Activated CD4-positive, alpha-beta memory T cell treated with anti-CD3 and anti-CD28 coated beads for 36 hours (primary cell): ENCODE measurements at regions of chr1 and their contacts with region 1.

Region 1: GRCh38 chr1:248229360-248229908 is 1.8 kb upstream of the OR2M4 start:
- DNase-seq: no peak
- H3K4me3 Mint-ChIP-seq: no peak overlapping the region
- H3K27ac Mint-ChIP-seq: no peak overlapping the region
- H3K4me1 Mint-ChIP-seq: no peaks in the 10 kb centered on the region
- H3K27me3 Mint-ChIP-seq: no peaks in the 10 kb centered on the region

Region 2: GRCh38 chr1:248114890-248115289 is 114.5 kb before region 1 on chr1:
- CTCF ChIA-PET with region 1: no interaction called
- POLR2A ChIA-PET with region 1: no interaction called
- intact Hi-C with region 1: no loop called
- DNase-seq: no peak
- H3K4me3 Mint-ChIP-seq: no peak overlapping the region
- H3K27ac Mint-ChIP-seq: no peak overlapping the region
- H3K4me1 Mint-ChIP-seq: no peaks in the 10 kb centered on the region
- H3K27me3 Mint-ChIP-seq: no peaks in the 10 kb centered on the region

Region 3: DNA sequence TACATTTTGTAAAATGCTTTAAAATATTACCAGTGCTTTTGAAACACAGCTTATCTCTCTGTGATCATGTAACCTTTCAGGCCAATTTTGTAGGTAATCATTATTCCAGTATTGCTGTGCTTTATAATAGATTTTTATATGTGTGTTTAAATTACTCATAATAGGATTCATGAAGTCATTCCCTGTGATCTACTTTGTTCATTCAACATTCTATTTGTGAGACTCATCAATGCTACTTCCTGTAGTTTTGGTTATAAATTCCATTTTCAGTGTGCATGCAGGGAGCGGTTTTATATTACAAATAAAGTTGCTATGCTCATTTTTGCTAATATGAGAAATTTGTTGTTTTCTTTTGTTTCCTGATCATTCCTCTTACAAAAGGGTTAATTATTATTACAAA is 88.6 kb before region 1 on chr1:
- CTCF ChIA-PET with region 1: no interaction called
- POLR2A ChIA-PET with region 1: no interaction called
- intact Hi-C with region 1: no loop called
- DNase-seq: no peak
- H3K4me3 Mint-ChIP-seq: no peak overlapping the region
- H3K27ac Mint-ChIP-seq: no peak overlapping the region
- H3K4me1 Mint-ChIP-seq: no peaks in the 10 kb centered on the region
- H3K27me3 Mint-ChIP-seq: no peaks in the 10 kb centered on the region

Region 4: GRCh38 chr1:248243204-248243603 is 13.8 kb after region 1 on chr1:
- CTCF ChIA-PET with region 1: interaction called, 10 read pairs
- POLR2A ChIA-PET with region 1: no interaction called
- intact Hi-C with region 1: no loop called
- DNase-seq: peak; percentile 29
- H3K4me3 Mint-ChIP-seq: no peak overlapping the region
- H3K27ac Mint-ChIP-seq: no peak overlapping the region
- H3K4me1 Mint-ChIP-seq: peaks cover 2% of the 10 kb centered on the region
- H3K27me3 Mint-ChIP-seq: peaks cover 15% of the 10 kb centered on the region